ENCODE measurements at regions of chr21 and their contacts with region 1.

Region 1: GRCh38 chr21:26715878-26716506 is 129.2 kb downstream of the ADAMTS1 start:
- DNase-seq: peak in 7 of 10 donors; percentile 39 to 93 (median 60)

Region 2: DNA sequence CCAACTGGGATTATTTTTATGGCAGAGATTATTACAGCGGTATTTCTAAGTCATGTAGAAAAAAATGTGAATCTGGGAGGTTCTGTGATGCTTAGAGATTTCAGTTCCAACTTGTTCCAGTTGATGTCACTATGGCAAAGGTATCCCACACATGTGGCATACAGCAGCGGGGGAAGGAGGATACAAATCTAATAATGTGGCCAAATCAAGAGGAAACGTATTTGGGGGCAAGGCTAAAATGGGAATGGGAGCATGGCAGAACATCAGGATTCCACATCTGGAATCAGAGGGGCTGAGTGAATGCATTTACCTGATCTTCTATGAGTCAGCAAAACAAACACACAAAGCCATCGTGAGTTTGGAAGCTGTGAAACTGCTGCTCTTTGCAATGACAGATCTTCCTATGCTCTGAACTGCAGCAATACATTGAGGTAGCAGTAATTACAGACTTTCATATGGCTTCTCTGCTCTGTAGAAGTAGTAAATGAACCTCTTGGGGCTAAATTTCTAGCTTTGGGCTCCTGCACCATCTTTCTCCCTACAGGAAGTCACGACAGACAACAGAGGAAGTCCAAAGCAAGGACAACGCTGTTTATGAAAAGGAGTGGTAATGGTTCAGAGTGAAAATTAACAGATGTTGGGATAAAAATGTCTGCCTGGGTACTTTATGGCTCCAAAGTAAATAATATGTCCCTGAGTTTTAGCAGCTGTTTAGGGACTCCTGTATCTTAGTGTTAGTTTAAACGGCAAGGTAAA is 925.7 kb before region 1 on chr21:
- intact Hi-C with region 1: loop called (anchors 2 kb)
- DNase-seq: peak in 1 of 10 donors; percentile 65

Region 3: GRCh38 chr21:25881525-25882376 is 834.2 kb before region 1 on chr21:
- intact Hi-C with region 1: loop called (anchors 5 kb)
- DNase-seq: peak in 9 of 10 donors; percentile 62 to 96 (median 75)

Region 4: GRCh38 chr21:26826801-26827200 is 110.8 kb after region 1 on chr21:
- intact Hi-C with region 1: no loop called
- DNase-seq: no peak

Region 5: GRCh38 chr21:27104846-27105431 is 388.9 kb after region 1 on chr21:
- intact Hi-C with region 1: no loop called
- DNase-seq: no peak